AG04450 (cell line): ENCODE measurements at regions of chr9 and their contacts with region 1.

Region 1: DNA sequence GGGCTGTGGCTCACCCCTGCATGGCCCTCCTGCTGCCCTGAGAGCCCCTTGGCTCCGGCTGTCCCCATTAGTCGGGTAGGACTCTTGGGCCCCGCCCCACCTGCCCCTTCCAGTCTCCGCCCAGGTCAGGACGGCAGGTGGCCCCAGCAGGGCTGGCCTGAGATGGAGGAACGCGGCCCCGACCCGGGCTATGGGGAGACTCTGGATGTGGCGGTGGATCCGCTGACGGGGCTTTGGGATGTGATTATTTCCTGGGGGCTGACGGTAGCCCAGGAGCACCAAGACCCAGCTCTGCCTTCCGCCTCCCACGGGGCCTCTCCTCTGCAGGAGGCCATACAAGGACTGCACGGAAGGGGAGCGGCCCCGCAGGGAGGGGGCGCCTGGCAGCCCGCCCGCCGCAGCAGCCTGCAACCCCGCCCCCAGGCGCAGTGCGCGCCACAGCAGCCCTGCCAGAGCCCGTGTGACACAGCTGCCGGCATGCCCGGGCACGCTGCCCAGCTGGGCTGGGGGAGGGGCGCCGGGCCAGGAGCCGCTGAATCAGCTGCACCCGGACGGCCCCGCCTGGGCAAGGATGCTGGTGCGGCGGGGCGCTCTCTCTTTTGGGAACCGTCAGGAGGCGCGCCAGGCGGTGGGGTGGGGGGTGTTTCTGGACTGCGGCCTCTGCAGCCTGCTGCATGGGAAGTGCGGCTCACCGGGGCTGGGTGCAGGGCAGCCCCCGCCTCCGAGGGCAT is 9.2 kb downstream of the TMEM250 start:
- DNase-seq: peak; percentile 67
- H3K4me3 ChIP-seq: peak overlapping the region; percentile 36
- H3K27ac ChIP-seq: peak overlapping the region; percentile 65
- H3K27me3 ChIP-seq: no peaks in the 10 kb centered on the region
- CTCF ChIP-seq: peak; percentile 21

Region 2: DNA sequence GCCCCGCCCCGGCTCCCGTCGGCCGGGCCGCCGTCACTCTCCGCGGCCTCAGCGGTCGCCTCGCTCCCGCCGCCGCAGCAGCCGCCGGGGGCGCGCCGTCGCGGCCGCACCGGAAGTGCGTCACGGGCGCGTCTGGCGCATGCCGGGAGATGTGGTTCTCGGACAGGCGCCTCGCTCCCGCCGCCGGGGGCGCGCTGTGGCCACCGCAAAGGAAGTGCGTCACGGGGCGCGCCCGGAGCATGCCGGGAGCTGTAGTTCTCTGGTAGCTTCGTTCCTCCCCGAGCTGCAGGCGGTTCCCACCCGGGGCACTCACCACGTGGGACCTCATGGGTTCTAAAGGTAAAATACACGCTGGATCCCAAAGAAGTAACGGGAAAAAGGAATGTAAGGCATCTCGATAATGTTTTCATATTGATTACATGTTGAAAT is 148.2 kb before region 1 on chr9 and contains the start of gene UBAC1:
- CTCF ChIA-PET with region 1: no interaction called
- POLR2A ChIA-PET with region 1: no interaction called
- DNase-seq: peak; percentile 78
- H3K4me3 ChIP-seq: peak within 1 kb of the TSS; percentile 80
- H3K27ac ChIP-seq: peak within 1 kb of the TSS; percentile 39
- H3K27me3 ChIP-seq: peaks cover 11% of the 10 kb centered on the region
- CTCF ChIP-seq: no peak; the same call in 1 of the 2 replicates
- polyA plus RNA-seq, gene UBAC1: 33.6 and 35.8 TPM in 2 replicates

Region 3: DNA sequence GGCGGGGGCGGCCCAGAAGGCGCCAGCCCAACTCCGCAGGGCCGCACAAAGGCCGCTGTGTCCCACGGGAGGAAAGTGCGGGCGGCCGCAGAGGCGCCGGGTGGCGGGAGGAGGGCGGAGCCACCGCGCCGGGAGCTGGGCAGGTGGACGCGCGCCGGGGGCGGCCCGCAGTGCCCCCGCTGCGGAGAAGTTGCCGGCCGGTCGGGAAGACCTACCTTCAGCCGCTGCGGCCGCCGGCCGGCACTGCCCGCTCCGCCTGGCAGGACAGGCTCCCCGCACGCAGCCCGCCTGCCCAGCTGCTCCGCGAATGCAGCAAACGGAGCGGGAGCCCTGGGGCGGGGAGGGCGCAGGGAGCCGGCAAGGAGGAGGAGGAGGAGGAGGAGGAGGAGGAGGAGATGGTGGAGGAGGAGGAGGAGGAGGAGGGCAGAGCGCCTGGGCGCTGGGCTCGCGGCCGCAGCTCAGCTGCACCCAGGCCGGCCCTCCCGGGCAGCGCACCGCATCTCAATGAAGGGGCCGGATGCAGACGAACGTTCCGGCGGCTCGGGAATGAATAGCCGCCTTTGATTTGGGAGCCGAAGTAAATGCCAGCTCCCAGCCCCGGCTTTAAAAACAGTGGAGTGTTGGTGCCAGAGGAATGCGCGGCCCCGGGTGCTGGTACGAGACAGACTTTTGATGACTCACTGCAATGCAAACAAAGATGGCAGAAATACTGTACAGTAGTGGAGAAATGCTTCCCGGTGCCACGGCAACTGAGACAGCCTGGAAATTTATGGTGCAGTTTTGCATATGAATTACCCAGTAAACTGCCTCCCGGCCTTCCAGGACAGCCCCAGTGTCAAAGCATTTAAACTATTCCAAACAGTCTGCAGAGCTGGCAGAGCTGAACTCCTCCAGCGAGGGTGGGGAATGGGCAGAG is 57.7 kb before region 1 on chr9:
- CTCF ChIA-PET with region 1: no interaction called
- POLR2A ChIA-PET with region 1: interaction called, 12 read pairs
- DNase-seq: peak; percentile 80
- H3K4me3 ChIP-seq: peak overlapping the region; percentile 67
- H3K27ac ChIP-seq: peak overlapping the region; percentile 83
- H3K27me3 ChIP-seq: no peaks in the 10 kb centered on the region
- CTCF ChIP-seq: no peak

Region 4: DNA sequence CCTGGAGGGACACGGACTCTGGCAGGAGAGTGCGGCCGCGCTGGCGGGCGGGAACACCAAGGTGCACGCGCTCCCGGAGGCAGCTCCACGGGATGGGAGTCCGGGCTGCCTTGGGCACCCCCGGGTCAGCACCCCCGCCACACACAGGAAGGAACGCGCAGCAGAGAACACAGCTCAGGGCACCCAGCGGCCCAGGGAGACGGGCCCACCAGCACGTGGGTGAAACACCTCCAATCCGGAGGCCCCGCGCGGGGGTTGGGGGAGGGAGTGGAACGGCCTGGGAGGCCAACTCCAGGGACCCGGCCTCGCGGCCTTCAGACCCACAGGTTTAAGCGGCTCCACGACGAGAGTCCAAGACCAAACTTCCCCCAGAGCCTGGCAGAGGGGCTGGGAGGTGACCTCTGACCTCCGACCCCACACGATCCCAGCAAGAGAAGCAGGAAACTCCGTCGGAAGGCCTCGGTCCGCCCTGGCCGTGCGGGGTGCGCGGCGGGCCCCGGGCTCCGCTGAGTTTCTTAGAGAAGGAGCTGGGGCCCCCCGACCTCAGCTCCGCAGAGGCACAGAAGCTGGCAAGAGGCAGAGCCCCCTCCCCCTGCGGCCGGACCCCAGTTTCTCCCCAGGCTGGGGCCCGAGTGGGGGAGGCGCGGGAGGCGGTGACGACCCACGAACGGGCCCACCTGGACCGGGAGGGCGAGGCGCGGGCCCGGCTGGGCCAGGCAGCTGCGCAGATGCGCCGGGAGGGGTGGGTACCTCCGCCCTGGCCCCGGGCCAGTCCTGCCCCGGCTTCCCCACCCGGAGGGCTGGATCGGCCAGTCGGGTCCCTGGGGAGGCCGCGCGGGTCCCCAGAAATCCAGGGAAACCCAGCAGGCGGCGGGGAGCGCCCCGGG is 15.3 kb before region 1 on chr9:
- CTCF ChIA-PET with region 1: interaction called, 5 read pairs
- POLR2A ChIA-PET with region 1: interaction called, 12 read pairs
- DNase-seq: no peak
- H3K4me3 ChIP-seq: peak overlapping the region; percentile 73
- H3K27ac ChIP-seq: peak overlapping the region; percentile 39
- H3K27me3 ChIP-seq: no peaks in the 10 kb centered on the region
- CTCF ChIP-seq: no peak